ENCODE measurements at regions of chr2 and their contacts with region 1.

Region 1: DNA sequence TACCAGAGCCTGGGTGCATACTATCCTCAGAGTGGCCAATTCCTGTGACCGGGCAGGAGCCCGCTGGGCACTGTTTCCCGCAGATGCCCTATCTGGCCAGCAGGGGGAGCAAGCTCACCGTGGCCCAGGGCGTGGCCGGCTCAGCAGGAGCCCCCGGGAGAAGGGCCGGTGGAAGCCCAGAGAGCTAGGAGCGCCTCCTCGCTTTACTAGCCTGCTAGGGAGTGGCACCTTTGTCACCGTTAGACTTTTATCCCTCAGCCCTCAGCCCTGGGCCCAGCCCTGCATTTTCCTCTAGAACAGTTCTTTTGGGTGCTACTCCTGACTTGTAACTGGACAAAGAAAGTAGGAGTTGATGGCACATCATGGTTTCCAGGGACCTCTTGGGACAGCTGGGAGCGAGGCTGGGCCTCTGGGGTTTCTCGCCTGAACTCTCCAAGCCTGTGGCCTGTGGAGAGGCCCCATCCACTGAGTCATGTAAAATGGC is 24.0 kb downstream of the TMEM177 start:
- DNase-seq: peak; percentile 73
- ATAC-seq: peak; percentile 95
- H3K4me3 ChIP-seq: peak overlapping the region in 1 of 3 experiments; percentile 25; a peak in 2 of 6 replicates
- H3K27ac ChIP-seq: no peak overlapping the region
- H3K4me1 ChIP-seq: peaks cover 53% of the 10 kb centered on the region
- H3K27me3 ChIP-seq: peaks cover 2 to 4% of the 10 kb centered on the region in 2 experiments; a peak in 2 of 5 replicates
- CTCF ChIP-seq: peak; percentile 98
- EP300 ChIP-seq: no peak
- POLR2A ChIP-seq: no peak
- RAD21 ChIP-seq: peak; percentile 98

Region 2: DNA sequence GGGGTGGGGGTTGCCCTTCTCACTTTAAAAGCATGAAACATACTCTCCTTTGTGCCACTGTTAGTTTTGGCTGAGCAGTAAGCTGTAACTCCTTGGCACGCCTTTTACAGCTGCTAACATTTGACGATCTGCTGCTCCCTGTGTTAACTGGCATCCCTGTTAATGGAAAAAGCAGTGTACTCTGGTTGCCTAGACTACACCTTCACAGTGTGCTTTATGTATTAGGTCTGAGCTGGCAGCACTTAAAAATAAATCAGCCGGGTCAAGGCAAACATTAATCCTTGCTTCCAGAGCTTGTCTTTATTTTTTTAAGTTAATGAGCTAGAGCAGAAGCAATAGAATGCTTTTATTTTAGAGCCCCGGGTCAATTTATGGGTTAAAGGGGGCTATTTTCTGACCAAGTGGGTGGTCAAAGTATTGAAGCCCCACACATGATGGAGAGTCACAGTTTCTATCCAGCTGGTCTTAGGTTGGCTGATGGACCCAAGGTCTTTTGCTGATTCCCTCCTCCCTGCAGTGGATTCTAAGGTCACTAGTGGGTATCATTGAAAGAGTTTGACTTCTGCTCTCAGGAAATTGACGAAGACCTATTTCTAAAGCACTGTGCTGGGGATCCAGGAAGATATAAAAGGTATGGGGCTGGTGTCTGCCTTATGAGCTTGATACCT is 104.2 kb before region 1 on chr2:
- CTCF ChIA-PET with region 1: no interaction called
- POLR2A ChIA-PET with region 1: no interaction called
- in situ Hi-C with region 1: no loop called
- intact Hi-C with region 1: no loop called
- DNase-seq: no peak
- ATAC-seq: no peak
- H3K4me3 ChIP-seq: no peak overlapping the region
- H3K27ac ChIP-seq: no peak overlapping the region
- H3K4me1 ChIP-seq: no peaks in the 10 kb centered on the region
- H3K27me3 ChIP-seq: peaks cover 1 to 3% of the 10 kb centered on the region in 2 experiments; a peak in 2 of 5 replicates
- CTCF ChIP-seq: no peak
- EP300 ChIP-seq: no peak
- POLR2A ChIP-seq: no peak
- RAD21 ChIP-seq: no peak

Region 3: GRCh38 chr2:119753041-119753929 is 50.3 kb after region 1 on chr2:
- CTCF ChIA-PET with region 1: interaction called, 11 read pairs
- POLR2A ChIA-PET with region 1: no interaction called
- in situ Hi-C with region 1: no loop called
- intact Hi-C with region 1: loop called (anchors 2 kb)
- DNase-seq: peak; percentile 61
- ATAC-seq: peak; percentile 80
- H3K4me3 ChIP-seq: no peak overlapping the region
- H3K27ac ChIP-seq: no peak overlapping the region
- H3K4me1 ChIP-seq: peaks cover 20% of the 10 kb centered on the region
- H3K27me3 ChIP-seq: no peaks in the 10 kb centered on the region; a peak in 2 of 5 replicates
- CTCF ChIP-seq: peak; percentile 89
- EP300 ChIP-seq: no peak
- POLR2A ChIP-seq: no peak
- RAD21 ChIP-seq: peak; percentile 83